Activated CD4-positive, alpha-beta T cell treated with anti-CD3 and anti-CD28 coated beads, Interleukin-2, amount 10 ng/mL, durations not matched to agents 24 days and 14 days (primary cell): ENCODE measurements at regions of chr7 and their contacts with region 1.

Region 1: GRCh38 chr7:44348300-44348699 is 22.9 kb upstream of the CAMK2B start:
- DNase-seq: no peak
- H3K4me3 Mint-ChIP-seq: no peak overlapping the region
- H3K27ac Mint-ChIP-seq: no peak overlapping the region
- H3K4me1 Mint-ChIP-seq: no peaks in the 10 kb centered on the region
- H3K27me3 Mint-ChIP-seq: peaks cover 43% of the 10 kb centered on the region

Region 2: DNA sequence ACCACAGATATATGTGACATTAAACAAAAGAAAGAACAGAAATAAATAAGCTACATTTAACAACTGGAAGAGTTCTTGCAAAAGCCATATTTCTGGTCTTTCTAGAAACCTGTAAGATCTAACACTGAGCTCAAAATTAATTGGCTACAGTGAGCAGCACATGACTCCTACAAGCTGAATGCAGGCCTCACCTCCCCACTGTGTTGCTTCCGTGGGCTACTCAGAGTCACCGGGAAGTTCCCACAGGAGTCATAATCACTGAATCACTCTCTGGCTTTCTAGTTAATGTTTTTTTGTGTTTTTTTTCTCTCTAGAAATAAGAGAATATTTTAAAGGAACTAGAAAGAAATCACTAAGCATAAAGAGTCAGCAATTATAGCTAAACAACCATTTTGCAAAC is 468.8 kb before region 1 on chr7:
- intact Hi-C with region 1: no loop called
- DNase-seq: no peak
- H3K4me3 Mint-ChIP-seq: no peak overlapping the region
- H3K27ac Mint-ChIP-seq: no peak overlapping the region
- H3K4me1 Mint-ChIP-seq: no peaks in the 10 kb centered on the region
- H3K27me3 Mint-ChIP-seq: no peaks in the 10 kb centered on the region

Region 3: GRCh38 chr7:44264221-44264931 is 83.9 kb before region 1 on chr7:
- intact Hi-C with region 1: no loop called
- DNase-seq: no peak
- H3K4me3 Mint-ChIP-seq: no peak overlapping the region
- H3K27ac Mint-ChIP-seq: no peak overlapping the region
- H3K4me1 Mint-ChIP-seq: peaks cover 11% of the 10 kb centered on the region
- H3K27me3 Mint-ChIP-seq: peaks cover 4% of the 10 kb centered on the region

Region 4: DNA sequence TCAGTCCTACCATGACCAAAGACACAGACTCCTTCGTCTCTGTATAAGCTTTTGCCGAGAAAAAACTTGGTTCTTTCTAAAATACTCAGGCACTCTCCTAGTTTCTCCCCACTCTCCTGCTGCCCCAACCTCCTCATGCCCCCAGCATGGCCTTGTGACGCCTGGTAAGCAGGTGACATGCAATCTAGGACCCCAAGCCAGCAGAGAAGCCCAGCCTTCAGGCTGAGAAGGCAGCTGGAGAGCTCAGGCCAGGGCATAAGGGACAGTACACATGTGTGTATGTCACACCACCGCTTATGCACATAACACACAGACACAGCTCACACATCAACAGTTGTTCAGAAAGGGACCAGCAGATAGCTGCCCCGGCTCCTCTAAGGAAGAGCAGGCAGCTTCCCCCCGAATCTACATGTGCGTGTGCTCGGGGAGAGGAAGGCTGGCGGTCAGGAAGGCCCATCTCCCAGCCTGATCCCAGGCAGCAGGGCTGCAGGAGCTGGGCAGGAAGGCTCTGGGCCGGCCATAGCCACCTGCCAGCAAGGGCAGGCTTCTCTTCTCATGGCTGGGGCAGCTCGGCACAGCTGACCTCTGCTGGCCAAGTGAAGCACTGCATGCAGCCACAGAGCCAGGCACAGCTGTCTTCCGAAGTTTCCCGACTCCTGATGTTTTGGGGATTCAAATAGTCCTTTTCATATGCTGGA is 216.9 kb after region 1 on chr7:
- intact Hi-C with region 1: loop called (anchors 2 kb)
- DNase-seq: peak; percentile 90
- H3K4me3 Mint-ChIP-seq: no peak overlapping the region
- H3K27ac Mint-ChIP-seq: peak overlapping the region; percentile 38
- H3K4me1 Mint-ChIP-seq: no peaks in the 10 kb centered on the region
- H3K27me3 Mint-ChIP-seq: no peaks in the 10 kb centered on the region

Region 5: GRCh38 chr7:44665531-44666213 is 317.4 kb after region 1 on chr7:
- intact Hi-C with region 1: no loop called
- DNase-seq: no peak
- H3K4me3 Mint-ChIP-seq: no peak overlapping the region
- H3K27ac Mint-ChIP-seq: no peak overlapping the region
- H3K4me1 Mint-ChIP-seq: peaks cover 12% of the 10 kb centered on the region
- H3K27me3 Mint-ChIP-seq: no peaks in the 10 kb centered on the region